Cardiac septum (tissue), 1 donor: ENCODE measurements at regions of chr1 and their contacts with region 1.

Region 1: DNA sequence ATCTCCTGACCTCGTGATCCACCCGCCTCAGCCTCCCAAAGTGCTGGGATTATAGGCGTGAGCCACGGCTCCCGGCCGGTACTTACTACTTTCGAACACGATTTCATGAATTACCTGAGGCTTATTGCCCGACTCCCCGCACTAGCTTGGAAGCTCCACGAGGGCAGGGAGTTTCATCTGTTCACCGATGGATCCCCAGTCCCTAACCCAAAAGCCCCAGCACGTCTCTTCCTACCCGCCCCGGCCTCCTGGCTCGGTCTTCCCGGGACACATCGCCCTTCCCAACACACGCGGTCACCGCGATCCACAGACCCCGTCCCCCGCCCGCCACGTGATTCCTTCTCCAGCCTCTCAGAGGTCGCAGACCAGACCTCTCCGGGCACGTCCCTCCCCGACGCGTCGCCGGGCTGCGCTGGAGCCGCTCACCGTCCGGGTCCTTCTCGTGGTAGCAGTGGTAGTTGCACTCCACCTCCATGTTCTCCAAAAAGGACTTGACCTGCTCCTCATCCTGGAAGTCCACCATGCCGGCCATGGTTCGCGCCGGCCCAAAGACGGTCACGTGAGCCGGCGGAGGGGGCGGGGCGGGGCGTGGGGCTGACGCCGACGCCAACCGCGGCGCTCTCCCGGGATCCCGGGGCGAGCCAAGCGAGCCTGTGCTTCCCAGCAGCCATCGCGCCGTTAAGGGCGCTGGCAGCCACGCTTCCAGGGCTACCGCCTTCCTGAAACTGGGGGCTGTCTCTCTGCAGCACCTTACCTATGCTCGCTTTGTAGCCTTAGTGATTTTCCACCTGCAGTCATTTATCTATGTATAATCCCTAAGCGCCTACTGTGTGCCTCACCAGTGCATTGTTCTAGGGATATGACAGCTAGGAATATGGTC is at the start of gene COA7:
- DNase-seq: peak; percentile 94
- total RNA-seq, gene COA7: 14.2 TPM

Region 2: GRCh38 chr1:52365746-52366516 is 332.1 kb before region 1 on chr1 and contains the start of gene CC2D1B:
- intact Hi-C with region 1: loop called (anchors 5 kb)
- DNase-seq: peak; percentile 99
- total RNA-seq, gene CC2D1B: 19.5 TPM

Region 3: GRCh38 chr1:52552505-52553361 is 145.3 kb before region 1 on chr1 and contains the start of gene TUT4:
- intact Hi-C with region 1: loop called (anchors 5 kb)
- DNase-seq: peak; percentile 91
- total RNA-seq, gene TUT4: 37.1 TPM

Region 4: DNA sequence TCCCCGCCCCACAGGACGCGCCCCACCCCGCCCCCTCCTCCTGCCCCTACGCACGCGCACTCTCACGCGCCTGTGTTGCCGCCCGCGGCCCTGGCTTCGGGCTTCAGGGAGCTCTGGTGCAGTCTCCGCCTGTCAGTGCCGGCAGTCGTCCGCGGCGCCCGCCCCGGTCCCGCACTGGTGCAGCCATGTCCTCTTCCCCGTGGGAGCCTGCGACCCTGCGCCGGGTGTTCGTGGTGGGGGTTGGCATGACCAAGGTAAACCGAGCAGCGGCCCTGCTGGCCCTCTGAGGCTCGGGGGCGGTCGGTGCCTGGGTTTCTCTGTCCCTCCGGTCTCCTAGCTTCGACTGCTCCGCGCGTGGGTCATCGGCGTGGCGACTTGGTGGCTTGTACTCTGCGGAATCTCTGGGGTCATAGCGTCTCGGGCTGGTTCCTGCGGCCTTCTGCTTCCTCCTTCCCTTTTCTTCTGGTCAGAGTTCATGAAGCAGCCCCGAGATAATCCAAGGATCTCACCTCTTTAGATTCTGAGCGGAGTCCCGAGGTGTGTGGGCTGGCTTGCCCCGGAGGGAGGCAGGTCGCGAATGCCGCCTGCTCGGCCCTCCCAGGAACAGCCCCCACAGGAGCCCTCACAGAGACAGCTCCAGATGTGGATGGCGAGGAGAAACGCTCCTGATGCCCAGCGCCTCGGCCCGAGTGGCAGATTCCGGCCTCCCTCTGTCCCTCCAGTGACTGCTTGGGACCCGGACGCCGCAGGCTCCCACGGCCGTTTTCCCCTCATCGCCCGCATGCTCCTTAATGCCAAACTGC is 229.4 kb after region 1 on chr1 and contains the start of gene SCP2:
- intact Hi-C with region 1: loop called (anchors 2 kb)
- DNase-seq: peak; percentile 91
- total RNA-seq, gene SCP2: 124 TPM